Naive thymus-derived CD4-positive, alpha-beta T cell (primary cell): ENCODE measurements at regions of chr1 and their contacts with region 1.

Region 1: GRCh38 chr1:205750138-205751035 is at the start of gene NUCKS1:
- DNase-seq: peak; percentile 79 to 99 (median 97)
- ATAC-seq: peak; percentile 86
- H3K4me3 ChIP-seq: peak within 1 kb of the TSS; percentile 81
- H3K4me3 Mint-ChIP-seq: peak within 1 kb of the TSS; percentile 83 to 99 (median 96)
- H3K27ac ChIP-seq: peak within 1 kb of the TSS; percentile 95
- H3K27ac Mint-ChIP-seq: peak within 1 kb of the TSS; percentile 96 to 100 (median 98)
- H3K4me1 ChIP-seq: peaks cover 6 to 10% of the 10 kb centered on the region in 2 donors
- H3K4me1 Mint-ChIP-seq: peaks cover 24 to 49% (median 39%) of the 10 kb centered on the region in 7 donors
- H3K27me3 ChIP-seq: no peaks in the 10 kb centered on the region
- H3K27me3 Mint-ChIP-seq: peaks cover 0 to 3% (median 0%) of the 10 kb centered on the region in 5 donors
- total RNA-seq, gene NUCKS1: 70.4 to 164 (median 122) TPM

Region 2: DNA sequence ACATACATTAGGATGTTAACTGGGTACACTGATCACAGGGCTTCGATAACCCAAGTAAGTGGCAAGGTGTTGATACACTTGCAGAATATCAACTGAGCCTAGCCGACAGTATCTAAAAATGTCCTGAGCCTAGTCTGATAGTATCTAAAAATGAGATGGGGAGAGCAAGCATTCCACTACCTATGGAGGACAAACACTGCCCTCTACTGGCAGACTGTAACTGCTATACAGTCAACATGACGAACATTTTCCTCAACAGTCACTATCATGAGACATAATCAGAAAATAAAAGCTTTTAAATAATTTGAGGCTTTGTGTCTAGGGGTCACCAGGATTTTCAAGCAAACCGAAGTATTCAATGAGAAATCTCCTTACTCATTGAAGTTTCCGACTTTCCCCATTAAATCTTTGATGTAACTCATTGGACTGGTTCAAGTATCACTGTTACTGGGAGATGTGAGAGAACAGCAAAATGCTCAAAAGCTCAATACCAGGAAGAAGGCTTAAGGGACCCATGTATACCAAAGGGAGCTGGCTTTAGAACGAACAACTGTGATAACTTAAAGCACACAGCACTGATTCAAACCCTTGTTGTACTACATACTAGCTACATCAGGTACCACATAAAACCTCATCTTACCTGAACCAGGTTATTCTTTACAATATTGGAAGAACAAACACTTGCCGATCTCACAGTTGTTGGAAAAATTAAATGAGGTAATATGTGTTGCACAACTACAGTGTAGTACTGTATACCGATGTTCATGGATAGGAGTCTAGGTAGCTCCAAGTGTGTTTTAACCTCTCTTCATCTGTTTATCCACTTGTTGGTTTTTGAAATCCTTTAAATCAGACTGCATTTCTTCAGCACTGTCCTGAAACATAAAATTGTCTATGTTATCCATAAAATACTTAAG is 39.0 kb before region 1 on chr1:
- CTCF ChIA-PET with region 1: interaction called, 5 read pairs
- POLR2A ChIA-PET with region 1: interaction called, 8 read pairs
- intact Hi-C with region 1: loop called (anchors 1 to 2 kb)
- DNase-seq: peak in 8 of 9 donors; percentile 36 to 72 (median 64)
- ATAC-seq: peak; percentile 91
- H3K4me3 ChIP-seq: no peak overlapping the region
- H3K4me3 Mint-ChIP-seq: no peak overlapping the region
- H3K27ac ChIP-seq: no peak overlapping the region
- H3K27ac Mint-ChIP-seq: peak overlapping the region in 6 of 9 donors; percentile 7 to 87 (median 15)
- H3K4me1 ChIP-seq: no peaks in the 10 kb centered on the region
- H3K4me1 Mint-ChIP-seq: peaks cover 9 to 28% (median 20%) of the 10 kb centered on the region in 7 donors
- H3K27me3 ChIP-seq: no peaks in the 10 kb centered on the region
- H3K27me3 Mint-ChIP-seq: no peaks in the 10 kb centered on the region

Region 3: GRCh38 chr1:205729945-205730610 is 20.3 kb before region 1 on chr1:
- CTCF ChIA-PET with region 1: interaction called, 3 read pairs
- POLR2A ChIA-PET with region 1: interaction called, 4 read pairs
- intact Hi-C with region 1: loop called (anchors 2 kb)
- DNase-seq: no peak
- ATAC-seq: no peak
- H3K4me3 ChIP-seq: no peak overlapping the region
- H3K4me3 Mint-ChIP-seq: no peak overlapping the region
- H3K27ac ChIP-seq: no peak overlapping the region
- H3K27ac Mint-ChIP-seq: peak overlapping the region in 2 of 9 donors; percentile 9 to 12
- H3K4me1 ChIP-seq: peaks cover 0 to 5% of the 10 kb centered on the region in 2 donors
- H3K4me1 Mint-ChIP-seq: peaks cover 25 to 64% (median 51%) of the 10 kb centered on the region in 7 donors
- H3K27me3 ChIP-seq: no peaks in the 10 kb centered on the region
- H3K27me3 Mint-ChIP-seq: no peaks in the 10 kb centered on the region

Region 4: GRCh38 chr1:205783904-205784303 is 33.5 kb after region 1 on chr1:
- CTCF ChIA-PET with region 1: no interaction called
- POLR2A ChIA-PET with region 1: interaction called, 11 read pairs
- intact Hi-C with region 1: loop called in 1 of 2 experiments (anchors 2 kb)
- DNase-seq: no peak
- ATAC-seq: no peak
- H3K4me3 ChIP-seq: no peak overlapping the region
- H3K4me3 Mint-ChIP-seq: no peak overlapping the region
- H3K27ac ChIP-seq: no peak overlapping the region
- H3K27ac Mint-ChIP-seq: no peak overlapping the region
- H3K4me1 ChIP-seq: peaks cover 0 to 8% of the 10 kb centered on the region in 2 donors
- H3K4me1 Mint-ChIP-seq: peaks cover 6 to 16% (median 9%) of the 10 kb centered on the region in 7 donors
- H3K27me3 ChIP-seq: no peaks in the 10 kb centered on the region
- H3K27me3 Mint-ChIP-seq: no peaks in the 10 kb centered on the region

Region 5: GRCh38 chr1:205812878-205813754 is 62.7 kb after region 1 on chr1 and contains the start of gene SLC41A1:
- CTCF ChIA-PET with region 1: no interaction called
- POLR2A ChIA-PET with region 1: interaction called, 7 read pairs
- intact Hi-C with region 1: loop called (anchors 1 to 5 kb)
- DNase-seq: peak; percentile 71 to 96 (median 91)
- ATAC-seq: peak; percentile 98
- H3K4me3 ChIP-seq: peak within 1 kb of the TSS; percentile 69
- H3K4me3 Mint-ChIP-seq: peak within 1 kb of the TSS; percentile 88 to 94 (median 92)
- H3K27ac ChIP-seq: peak within 1 kb of the TSS; percentile 87
- H3K27ac Mint-ChIP-seq: peak within 1 kb of the TSS; percentile 79 to 97 (median 92)
- H3K4me1 ChIP-seq: peaks cover 23 to 36% of the 10 kb centered on the region in 2 donors
- H3K4me1 Mint-ChIP-seq: peaks cover 38 to 63% (median 60%) of the 10 kb centered on the region in 7 donors
- H3K27me3 ChIP-seq: no peaks in the 10 kb centered on the region
- H3K27me3 Mint-ChIP-seq: peaks cover 0 to 15% (median 0%) of the 10 kb centered on the region in 5 donors
- total RNA-seq, gene SLC41A1: 16.5 to 32.0 (median 27.8) TPM

Region 6: DNA sequence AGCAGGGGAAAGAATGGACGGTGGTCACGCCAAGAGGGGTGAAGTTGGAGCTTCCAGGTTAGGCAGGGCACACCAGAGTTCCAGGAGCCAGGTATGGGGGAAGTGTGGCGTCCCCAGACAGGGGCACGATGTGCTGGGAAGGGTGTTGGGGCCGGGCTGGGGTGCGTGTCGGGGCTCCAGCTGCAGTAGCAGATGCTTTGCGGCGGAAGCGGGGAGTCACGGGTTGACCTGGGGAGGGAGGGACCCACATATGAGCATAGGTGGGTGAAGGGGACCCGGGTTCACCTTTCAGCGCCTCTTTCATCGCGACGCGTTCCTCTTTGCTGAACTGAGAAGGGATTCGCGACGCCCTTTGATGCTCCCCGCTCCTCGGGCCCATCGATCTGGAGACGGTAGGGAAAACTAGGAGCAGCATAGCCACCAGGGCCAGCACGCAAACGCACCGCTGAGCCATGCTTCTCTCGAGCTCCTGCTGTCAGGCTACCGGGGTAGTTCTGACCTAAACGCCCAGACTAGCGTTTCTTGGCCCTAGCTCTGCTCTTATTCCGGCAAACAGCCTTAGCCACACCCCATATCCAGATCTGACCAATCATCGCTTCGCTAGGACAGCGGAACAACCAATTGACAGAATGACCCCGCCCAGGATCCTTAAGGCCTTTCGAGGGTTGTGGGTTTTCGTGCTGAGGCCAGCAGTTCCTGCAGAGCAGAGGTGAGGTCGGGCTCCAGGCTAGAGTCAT is 99.4 kb after region 1 on chr1 and contains the start of gene PM20D1:
- CTCF ChIA-PET with region 1: no interaction called
- POLR2A ChIA-PET with region 1: interaction called, 5 read pairs
- intact Hi-C with region 1: loop called in 1 of 2 experiments (anchors 1 kb)
- DNase-seq: peak; percentile 48 to 90 (median 85)
- ATAC-seq: peak; percentile 98
- H3K4me3 ChIP-seq: peak within 1 kb of the TSS; percentile 31
- H3K4me3 Mint-ChIP-seq: peak within 1 kb of the TSS; percentile 83 to 98 (median 96)
- H3K27ac ChIP-seq: peak within 1 kb of the TSS; percentile 67
- H3K27ac Mint-ChIP-seq: peak within 1 kb of the TSS; percentile 82 to 99 (median 94)
- H3K4me1 ChIP-seq: no peaks in the 10 kb centered on the region
- H3K4me1 Mint-ChIP-seq: peaks cover 0 to 19% (median 7%) of the 10 kb centered on the region in 7 donors
- H3K27me3 ChIP-seq: no peaks in the 10 kb centered on the region
- H3K27me3 Mint-ChIP-seq: peaks cover 0 to 8% (median 0%) of the 10 kb centered on the region in 5 donors
- total RNA-seq, gene PM20D1: 0.92 to 2.7 (median 1.9) TPM

Region 7: GRCh38 chr1:205913451-205914155 is 163.2 kb after region 1 on chr1:
- CTCF ChIA-PET with region 1: no interaction called
- POLR2A ChIA-PET with region 1: no interaction called
- intact Hi-C with region 1: no loop called
- DNase-seq: no peak
- ATAC-seq: no peak
- H3K4me3 ChIP-seq: no peak overlapping the region
- H3K4me3 Mint-ChIP-seq: no peak overlapping the region
- H3K27ac ChIP-seq: no peak overlapping the region
- H3K27ac Mint-ChIP-seq: no peak overlapping the region
- H3K4me1 ChIP-seq: no peaks in the 10 kb centered on the region
- H3K4me1 Mint-ChIP-seq: no peaks in the 10 kb centered on the region
- H3K27me3 ChIP-seq: no peaks in the 10 kb centered on the region
- H3K27me3 Mint-ChIP-seq: peaks cover 0 to 35% (median 10%) of the 10 kb centered on the region in 5 donors